ENCODE measurements at regions of chr20 and their contacts with region 1.

Region 1: DNA sequence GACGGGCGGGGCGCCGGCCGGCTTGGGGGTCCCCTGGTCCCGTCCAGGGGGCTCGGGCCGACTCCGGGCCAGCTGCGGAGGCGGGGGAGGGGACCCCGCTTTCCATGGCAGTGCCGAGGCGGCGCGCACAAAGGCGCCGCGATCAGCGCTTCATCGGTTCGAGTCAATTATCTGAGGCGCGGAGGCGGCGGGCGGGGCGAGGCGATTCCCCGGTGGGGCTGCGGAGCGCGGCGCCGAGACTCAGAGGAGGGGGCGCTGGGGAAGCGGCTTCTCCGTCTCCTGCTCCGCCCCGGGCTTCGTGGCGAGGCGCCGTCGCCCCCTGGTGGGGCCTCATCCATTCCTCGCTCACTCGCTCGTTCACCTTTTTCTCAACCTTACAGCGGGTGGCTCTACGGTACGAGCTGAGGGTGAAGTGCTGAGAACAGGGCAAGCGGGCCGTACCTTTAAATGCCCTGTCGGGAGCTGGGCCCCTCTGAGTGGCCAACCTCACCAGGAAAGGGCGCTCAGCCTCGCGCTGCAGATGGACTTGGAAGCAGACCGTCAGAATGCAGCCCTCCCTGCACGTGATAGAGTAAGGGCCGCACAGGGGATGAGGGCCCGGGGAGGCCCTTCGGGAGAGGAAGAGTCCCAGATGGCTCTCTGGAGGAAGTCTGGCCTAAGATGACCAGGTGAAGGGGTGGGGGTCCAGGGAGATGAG is 39.9 kb downstream of the SLC52A3 start:
- DNase-seq: no peak

Region 2: DNA sequence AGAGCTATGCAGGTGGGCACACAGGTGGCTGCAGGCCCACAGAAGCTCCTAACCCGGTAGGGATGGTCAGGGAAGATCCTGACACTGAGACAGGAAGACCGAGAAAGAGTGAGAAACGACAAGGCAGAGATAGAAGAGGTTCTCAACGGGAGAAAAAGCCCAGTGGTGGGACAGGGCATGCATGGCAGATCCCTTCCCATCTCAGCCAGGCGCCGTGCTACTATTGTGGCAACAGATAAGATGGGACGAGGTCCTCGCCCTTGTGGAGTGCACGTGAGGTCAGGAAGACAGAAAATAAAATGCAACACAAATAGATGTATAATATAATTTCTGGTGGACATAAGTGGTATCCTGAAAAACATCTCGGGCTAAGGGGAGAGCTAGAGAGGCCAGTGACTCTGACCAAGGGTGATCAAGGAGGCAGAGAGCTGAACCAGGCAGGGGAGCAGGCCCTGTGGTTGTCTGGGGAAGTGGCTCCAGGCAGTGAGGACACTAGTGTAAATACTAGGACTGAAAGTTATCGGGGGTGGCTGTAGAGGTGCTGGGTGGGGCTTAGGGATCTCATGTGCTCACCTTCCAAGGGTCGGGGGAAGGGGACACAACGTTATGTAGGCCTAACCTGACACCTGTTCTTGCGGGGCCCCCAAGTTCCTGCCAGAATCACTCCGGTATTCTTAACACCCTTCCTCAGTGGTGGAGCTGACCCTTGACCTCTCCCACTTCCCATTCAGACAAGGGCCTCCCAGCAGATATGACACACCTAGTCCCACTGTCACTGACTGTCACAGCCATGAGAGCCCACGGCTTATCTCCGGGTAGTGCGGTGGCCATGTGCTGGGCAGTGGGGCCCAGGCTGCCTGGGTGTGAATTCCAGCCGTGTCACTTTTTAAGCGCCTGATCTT is 76.4 kb before region 1 on chr20:
- intact Hi-C with region 1: loop called (anchors 2 kb)
- DNase-seq: no peak

Region 3: DNA sequence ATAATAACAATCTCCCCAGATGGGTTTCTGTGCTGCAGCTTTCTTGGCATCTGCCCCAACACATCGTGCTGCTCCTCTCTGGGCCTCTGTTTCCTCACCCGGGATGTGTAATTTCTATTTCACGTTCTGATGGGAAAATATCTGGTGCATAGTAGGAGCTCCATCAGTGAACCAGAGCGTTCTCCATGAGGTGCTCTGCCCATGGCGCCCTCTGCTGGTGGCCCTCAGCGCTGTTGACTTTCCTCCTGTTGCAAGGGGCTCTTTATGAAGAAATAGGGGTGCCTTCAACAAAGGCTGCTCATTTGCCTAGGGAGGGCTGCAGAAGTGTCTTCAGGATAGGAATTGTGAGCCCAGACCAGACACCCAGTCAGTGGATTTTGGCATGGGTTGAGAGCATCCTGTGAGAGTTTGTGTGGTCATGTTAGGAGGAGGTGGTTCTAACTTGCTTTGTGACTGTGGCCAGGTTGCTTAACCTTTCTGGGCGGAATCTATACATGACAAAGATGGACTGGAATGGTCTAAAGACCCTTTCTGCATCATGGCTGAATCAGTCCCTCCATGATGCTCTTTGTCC is 60.9 kb before region 1 on chr20:
- intact Hi-C with region 1: loop called (anchors 5 kb)
- DNase-seq: peak; percentile 88

Region 4: GRCh38 chr20:910870-911770 is 182.7 kb after region 1 on chr20:
- intact Hi-C with region 1: no loop called
- DNase-seq: no peak

Region 5: DNA sequence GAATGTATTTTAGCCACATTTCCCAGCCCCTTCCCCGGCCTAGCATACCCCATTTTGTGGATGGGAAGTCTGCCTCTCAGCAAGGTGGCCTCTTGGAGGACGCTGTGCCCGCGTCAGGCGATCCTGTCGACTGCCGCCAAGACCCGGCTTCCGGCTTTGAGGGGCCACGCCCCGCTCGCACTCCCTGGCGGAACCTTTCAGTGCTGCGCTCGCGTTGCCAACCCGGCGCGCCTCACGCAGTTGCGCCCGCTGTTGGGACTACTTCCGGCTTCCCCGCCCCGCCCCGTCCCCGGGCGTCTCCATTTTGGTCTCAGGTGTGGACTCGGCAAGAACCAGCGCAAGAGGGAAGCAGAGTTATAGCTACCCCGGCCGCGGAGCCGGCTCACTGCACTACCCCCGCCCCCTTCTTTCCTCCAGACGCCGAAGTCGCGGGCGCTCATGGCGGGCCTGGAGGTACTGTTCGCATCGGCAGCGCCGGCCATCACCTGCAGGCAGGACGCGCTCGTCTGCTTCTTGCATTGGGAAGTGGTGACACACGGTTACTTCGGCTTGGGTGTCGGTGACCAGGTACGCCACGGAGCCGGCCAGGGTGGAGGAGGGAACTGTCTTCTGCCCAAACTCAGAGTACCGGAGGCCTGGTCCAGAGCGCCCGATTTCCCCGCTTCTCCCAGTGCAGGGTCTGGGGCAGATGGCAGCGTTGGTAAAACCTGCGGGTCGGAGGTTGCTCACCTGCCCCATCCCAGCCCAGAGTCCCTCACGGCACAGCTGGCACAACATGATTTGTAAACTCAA is 390.1 kb after region 1 on chr20 and contains the start of gene PSMF1:
- intact Hi-C with region 1: no loop called
- DNase-seq: peak; percentile 97
- total RNA-seq, gene PSMF1: 119 TPM

Measured in cardiac septum (tissue), 1 donor.